Body of pancreas (tissue), 4 donors: ENCODE measurements at regions of chr7 and their contacts with region 1.

Region 1: DNA sequence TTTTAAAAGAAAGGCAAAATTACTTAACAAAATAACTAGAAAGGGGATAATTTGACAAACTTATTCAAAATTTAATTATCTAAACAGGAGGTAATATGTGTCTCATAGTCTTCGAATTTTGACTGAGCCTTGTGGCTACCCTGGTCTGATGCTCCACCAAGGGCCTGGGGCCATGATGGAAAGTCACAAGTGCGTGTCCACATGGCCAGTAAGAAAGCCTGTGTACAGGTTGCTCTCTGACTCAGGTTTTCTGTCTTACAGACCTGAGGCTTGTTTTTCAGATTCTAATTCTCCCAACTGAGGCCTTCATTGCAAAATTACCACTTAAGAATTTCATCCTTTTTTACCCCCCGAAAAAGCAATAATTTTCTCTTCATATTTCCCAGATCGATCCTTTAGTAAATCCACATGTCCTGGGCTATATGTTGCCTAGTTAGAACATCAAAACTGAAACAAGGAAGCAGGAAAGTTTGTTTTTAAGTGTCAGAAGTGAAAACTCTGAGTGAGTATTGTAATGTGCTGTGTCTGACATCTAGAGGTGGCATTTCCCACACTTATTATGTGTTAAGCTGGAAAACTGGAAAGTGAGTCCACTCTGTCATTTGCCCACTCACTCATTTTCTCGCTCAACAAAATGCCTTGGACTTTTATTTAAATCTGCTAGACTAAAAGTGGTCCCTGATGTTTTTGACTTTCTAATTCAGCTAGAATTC is 10.0 kb downstream of the CYP3A43 start:
- DNase-seq: peak in 1 of 4 donors; percentile 32
- ATAC-seq: peak; percentile 77
- H3K4me3 ChIP-seq: no peak overlapping the region
- H3K27ac ChIP-seq: peak overlapping the region; percentile 14 to 72 (median 68)
- H3K4me1 ChIP-seq: peaks cover 54% of the 10 kb centered on the region
- H3K27me3 ChIP-seq: no peaks in the 10 kb centered on the region
- CTCF ChIP-seq: peak; percentile 31 to 82 (median 74)
- POLR2A ChIP-seq: peak in 1 of 3 donors; percentile 13

Region 2: DNA sequence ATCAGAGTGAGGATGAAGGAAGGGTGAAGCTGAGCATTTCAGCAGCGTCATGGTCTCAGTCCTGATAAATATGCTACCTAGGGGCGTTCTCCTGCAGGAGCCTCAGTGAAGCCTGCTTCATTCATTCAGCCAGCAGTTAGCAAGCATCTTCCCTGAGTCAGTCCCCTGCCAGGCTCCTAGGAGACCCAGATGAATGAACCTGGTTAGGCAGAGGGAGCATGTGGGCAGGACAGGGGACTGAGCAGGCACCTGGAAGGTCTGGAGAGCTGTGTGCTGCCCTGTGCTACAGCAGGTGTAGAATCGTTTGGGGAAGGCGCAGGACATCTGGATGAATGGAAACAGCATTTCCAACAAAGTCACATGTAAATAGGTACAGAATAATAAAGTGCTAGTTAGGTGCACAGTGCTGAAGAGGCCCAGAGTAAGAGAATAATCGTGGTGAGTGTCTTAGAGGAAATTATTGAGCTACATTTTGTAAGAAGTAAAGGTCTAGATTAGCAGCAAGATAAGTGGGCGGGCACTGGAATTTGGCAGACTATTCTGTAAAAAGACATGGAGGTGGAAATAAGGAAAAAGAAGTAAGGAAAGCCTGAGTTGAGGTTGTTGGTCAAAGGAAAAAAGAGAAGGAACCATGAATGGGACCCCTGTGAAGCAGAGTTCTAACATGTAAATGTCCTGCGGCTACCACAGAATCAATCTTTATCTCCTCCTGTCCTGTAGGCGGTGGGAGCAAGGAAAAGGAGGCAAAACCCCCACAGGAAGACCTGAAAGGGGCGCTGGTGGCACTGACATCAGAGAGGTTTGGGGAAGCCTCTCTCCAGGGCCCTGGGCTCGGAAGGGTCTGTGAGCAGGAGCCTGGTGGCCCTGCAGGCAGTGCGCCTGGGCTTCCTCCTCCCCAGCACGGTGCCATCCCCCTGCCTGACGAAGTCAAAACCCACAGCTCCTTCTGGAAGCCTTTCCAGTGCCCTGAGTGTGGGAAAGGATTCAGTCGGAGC is 209.0 kb before region 1 on chr7:
- intact Hi-C with region 1: loop called (anchors 5 kb)
- DNase-seq: no peak
- ATAC-seq: no peak
- H3K4me3 ChIP-seq: no peak overlapping the region
- H3K27ac ChIP-seq: no peak overlapping the region
- H3K4me1 ChIP-seq: no peaks in the 10 kb centered on the region
- H3K27me3 ChIP-seq: no peaks in the 10 kb centered on the region
- CTCF ChIP-seq: no peak
- POLR2A ChIP-seq: no peak

Region 3: DNA sequence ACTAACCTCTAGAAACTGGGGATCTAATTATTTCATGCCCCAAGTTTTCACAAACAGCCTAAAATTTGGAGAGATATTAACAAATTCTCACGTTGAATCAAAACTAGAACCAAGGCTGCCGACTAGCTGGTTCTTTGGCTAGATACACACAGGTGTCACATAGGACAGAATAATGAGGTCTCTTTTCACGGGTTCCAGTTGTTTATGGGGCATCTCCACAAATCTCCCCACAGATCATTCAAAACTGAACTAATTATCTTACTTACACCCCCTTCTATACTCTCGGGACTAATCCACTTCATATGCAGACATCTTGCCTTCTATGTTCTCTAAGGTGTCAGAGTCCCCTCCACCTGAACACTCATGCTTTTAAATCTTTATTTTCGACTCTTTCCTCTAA is 55.5 kb after region 1 on chr7:
- intact Hi-C with region 1: no loop called
- DNase-seq: no peak
- ATAC-seq: no peak
- H3K4me3 ChIP-seq: no peak overlapping the region
- H3K27ac ChIP-seq: no peak overlapping the region
- H3K4me1 ChIP-seq: no peaks in the 10 kb centered on the region
- H3K27me3 ChIP-seq: no peaks in the 10 kb centered on the region
- CTCF ChIP-seq: no peak
- POLR2A ChIP-seq: no peak

Region 4: DNA sequence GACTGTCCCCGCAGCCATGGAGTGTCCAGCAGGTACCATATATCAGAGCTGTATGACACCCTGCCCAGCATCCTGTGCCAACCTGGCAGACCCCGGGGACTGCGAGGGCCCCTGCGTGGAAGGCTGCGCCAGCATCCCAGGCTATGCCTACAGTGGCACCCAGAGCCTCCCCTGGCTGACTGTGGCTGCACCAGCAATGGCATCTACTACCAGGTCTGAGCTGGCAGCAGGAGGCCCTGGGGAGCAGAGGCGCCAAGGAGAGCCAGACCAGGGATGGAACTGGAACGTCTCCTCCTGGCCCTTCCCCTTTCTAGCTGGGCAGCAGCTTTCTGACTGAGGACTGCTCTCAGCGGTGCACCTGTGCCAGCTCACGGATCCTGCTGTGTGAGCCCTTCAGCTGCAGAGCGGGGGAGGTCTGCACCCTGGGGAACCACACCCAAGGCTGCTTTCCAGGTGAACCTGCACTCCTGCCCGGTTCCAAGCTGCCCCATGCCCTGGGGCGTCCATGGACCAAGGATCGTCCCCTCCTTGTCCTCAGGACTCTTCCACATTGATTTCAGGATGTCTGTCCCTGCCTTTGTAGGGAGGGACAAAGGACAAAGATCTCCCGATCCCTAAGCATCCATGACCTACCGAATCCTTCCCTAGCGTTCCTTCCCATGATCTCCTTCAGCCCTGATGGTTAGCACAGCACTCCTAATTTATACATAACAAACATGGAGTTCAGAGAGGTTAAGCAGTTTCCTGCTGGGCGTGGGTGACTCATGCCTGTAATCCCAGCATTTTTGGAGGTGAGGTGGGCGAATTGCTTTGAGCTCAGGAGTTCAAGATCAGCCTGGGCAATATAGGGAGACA is 956.2 kb after region 1 on chr7:
- intact Hi-C with region 1: no loop called
- DNase-seq: peak in 1 of 4 donors; percentile 60
- ATAC-seq: no peak
- H3K4me3 ChIP-seq: no peak overlapping the region
- H3K27ac ChIP-seq: no peak overlapping the region
- H3K4me1 ChIP-seq: peaks cover 14% of the 10 kb centered on the region
- H3K27me3 ChIP-seq: no peaks in the 10 kb centered on the region
- CTCF ChIP-seq: no peak
- POLR2A ChIP-seq: no peak